Activated naive CD4-positive, alpha-beta T cell treated with anti-CD3 and anti-CD28 coated beads for 36 hours (primary cell): ENCODE measurements at regions of chr1 and their contacts with region 1.

Region 1: GRCh38 chr1:167263819-167264464 is 43.3 kb downstream of the POU2F1 start:
- DNase-seq: no peak
- H3K4me3 Mint-ChIP-seq: no peak overlapping the region
- H3K27ac Mint-ChIP-seq: no peak overlapping the region
- H3K4me1 Mint-ChIP-seq: peaks cover 20% of the 10 kb centered on the region
- H3K27me3 Mint-ChIP-seq: no peaks in the 10 kb centered on the region

Region 2: DNA sequence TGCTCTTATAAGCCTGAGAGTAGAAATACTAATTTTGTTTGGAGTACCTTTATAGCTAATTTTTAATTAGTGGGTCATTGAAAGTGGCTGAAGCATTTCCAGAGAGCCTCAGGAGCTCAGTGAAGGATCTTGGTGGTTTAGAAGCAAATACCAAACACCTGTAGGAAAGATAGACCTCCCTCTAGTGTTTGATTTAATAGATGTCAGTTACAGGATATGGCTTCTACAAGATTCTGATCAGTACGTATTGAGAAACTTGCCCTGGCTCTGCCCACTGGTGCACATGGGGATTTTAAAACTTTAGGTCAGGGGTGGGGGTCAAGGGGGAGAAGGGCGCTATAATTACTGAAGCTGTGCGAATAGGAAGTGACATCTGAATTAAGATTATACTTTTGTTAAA is 78.9 kb after region 1 on chr1:
- CTCF ChIA-PET with region 1: interaction called, 12 read pairs
- intact Hi-C with region 1: loop called (anchors 1 kb)
- DNase-seq: no peak
- H3K4me3 Mint-ChIP-seq: no peak overlapping the region
- H3K27ac Mint-ChIP-seq: no peak overlapping the region
- H3K4me1 Mint-ChIP-seq: peaks cover 3% of the 10 kb centered on the region
- H3K27me3 Mint-ChIP-seq: no peaks in the 10 kb centered on the region

Region 3: GRCh38 chr1:167401260-167401873 is 137.4 kb after region 1 on chr1:
- CTCF ChIA-PET with region 1: interaction called, 11 read pairs
- intact Hi-C with region 1: loop called (anchors 2 kb)
- DNase-seq: peak; percentile 70
- H3K4me3 Mint-ChIP-seq: no peak overlapping the region
- H3K27ac Mint-ChIP-seq: no peak overlapping the region
- H3K4me1 Mint-ChIP-seq: no peaks in the 10 kb centered on the region
- H3K27me3 Mint-ChIP-seq: no peaks in the 10 kb centered on the region